PC-3 (cell line): ENCODE measurements at regions of chr11 and their contacts with region 1.

Region 1: DNA sequence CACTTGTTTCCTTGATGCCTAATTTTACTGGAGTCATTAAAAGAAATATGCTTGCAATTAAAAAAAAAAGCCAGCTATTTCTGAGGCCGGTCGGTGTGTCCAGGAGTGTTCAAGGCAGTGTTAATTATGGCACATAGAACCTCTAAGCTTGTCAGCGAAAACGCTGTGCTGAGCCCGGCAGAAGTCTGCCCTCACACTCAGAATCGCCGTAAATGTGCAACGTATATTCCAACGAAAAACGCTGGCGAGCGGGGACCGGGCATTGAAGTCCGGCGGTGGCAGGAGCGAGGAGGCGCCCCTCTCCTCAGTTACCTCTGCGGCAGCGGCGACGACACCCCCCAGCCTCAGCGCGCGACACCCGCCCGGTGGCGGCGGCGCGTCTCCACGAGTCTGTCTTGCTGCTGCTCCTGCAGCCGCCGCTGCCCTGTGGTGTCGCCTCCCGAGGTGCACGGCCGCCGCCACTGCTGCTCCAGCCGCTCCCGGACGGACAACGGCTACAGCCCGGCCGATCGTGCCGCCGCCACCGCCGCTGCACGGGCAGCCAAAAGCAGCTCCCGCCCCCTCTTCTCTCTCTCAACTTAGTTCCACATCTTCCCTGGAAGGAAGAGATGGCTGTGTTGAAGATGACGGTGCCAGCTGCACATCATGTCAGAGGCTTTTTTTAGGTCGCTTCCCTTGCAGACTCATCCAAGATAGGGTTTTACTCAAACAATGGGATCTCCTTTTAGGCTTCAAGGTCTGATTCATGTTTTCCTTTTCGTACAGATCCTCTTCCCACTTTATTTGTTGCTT is 56.0 kb downstream of the JAM3 start:
- DNase-seq: no peak
- ATAC-seq: peak; percentile 93
- H3K4me3 ChIP-seq: peak overlapping the region; percentile 4; the same call in 1 of the 2 replicates
- H3K27ac ChIP-seq: no peak overlapping the region
- H3K4me1 ChIP-seq: no peaks in the 10 kb centered on the region
- H3K27me3 ChIP-seq: peaks cover 83% of the 10 kb centered on the region
- CTCF ChIP-seq: no peak

Region 2: GRCh38 chr11:134069426-134070341 is 55.2 kb before region 1 on chr11:
- CTCF ChIA-PET with region 1: no interaction called
- POLR2A ChIA-PET with region 1: no interaction called
- intact Hi-C with region 1: loop called (anchors 10 kb)
- DNase-seq: no peak
- ATAC-seq: no peak
- H3K4me3 ChIP-seq: no peak overlapping the region
- H3K27ac ChIP-seq: no peak overlapping the region
- H3K4me1 ChIP-seq: no peaks in the 10 kb centered on the region
- H3K27me3 ChIP-seq: peaks cover 95% of the 10 kb centered on the region
- CTCF ChIP-seq: no peak

Region 3: DNA sequence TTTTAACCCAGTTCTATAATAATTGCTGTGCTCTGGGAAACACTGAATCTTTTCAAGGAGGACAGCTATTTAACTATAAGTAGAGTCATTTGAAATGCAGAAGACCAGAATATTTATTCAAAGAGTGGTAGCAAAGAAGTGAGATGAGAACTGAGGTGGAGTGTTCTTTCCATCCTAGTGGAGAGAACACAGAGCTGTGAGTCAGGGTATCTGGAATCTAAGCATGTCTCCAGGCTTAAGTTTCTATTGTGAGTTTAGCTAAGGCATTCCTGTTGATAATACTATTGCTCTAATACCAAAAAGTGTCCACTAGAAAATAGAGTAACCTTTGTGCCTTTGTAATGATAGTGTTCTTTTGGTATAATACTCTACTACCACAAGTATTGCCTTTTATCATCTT is 23.6 kb before region 1 on chr11:
- CTCF ChIA-PET with region 1: no interaction called
- POLR2A ChIA-PET with region 1: no interaction called
- intact Hi-C with region 1: no loop called
- DNase-seq: no peak
- ATAC-seq: no peak
- H3K4me3 ChIP-seq: no peak overlapping the region
- H3K27ac ChIP-seq: no peak overlapping the region
- H3K4me1 ChIP-seq: no peaks in the 10 kb centered on the region
- H3K27me3 ChIP-seq: peaks cover 28% of the 10 kb centered on the region
- CTCF ChIP-seq: no peak

Region 4: DNA sequence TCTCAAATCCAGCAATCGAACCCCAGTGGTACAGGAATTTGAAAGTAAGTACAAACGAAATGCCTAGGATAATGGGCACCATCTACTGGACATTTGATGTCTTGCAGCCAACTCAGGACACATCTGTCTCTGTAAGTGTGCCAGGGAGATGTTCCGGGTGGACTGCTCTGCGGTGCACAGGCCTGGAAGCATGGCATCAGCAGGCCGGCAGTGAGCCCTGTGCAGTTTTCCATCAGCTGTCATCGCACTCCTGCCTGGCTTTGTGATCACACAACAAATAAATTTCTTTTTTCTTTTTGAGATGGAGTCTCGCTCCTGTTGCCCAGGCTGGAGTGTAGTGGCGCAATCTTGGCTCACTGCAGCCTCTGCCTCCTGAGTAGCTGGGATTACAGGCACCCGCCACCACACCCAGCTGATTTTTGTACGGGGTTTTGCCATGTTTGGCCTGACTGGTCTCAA is 15.0 kb after region 1 on chr11:
- CTCF ChIA-PET with region 1: no interaction called
- POLR2A ChIA-PET with region 1: no interaction called
- intact Hi-C with region 1: no loop called
- DNase-seq: peak; percentile 86
- ATAC-seq: peak; percentile 83
- H3K4me3 ChIP-seq: no peak overlapping the region
- H3K27ac ChIP-seq: no peak overlapping the region
- H3K4me1 ChIP-seq: no peaks in the 10 kb centered on the region
- H3K27me3 ChIP-seq: peaks cover 52% of the 10 kb centered on the region
- CTCF ChIP-seq: peak; percentile 91